MCF 10A (cell line): ENCODE measurements at regions of chr22 and their contacts with region 1.

Region 1: DNA sequence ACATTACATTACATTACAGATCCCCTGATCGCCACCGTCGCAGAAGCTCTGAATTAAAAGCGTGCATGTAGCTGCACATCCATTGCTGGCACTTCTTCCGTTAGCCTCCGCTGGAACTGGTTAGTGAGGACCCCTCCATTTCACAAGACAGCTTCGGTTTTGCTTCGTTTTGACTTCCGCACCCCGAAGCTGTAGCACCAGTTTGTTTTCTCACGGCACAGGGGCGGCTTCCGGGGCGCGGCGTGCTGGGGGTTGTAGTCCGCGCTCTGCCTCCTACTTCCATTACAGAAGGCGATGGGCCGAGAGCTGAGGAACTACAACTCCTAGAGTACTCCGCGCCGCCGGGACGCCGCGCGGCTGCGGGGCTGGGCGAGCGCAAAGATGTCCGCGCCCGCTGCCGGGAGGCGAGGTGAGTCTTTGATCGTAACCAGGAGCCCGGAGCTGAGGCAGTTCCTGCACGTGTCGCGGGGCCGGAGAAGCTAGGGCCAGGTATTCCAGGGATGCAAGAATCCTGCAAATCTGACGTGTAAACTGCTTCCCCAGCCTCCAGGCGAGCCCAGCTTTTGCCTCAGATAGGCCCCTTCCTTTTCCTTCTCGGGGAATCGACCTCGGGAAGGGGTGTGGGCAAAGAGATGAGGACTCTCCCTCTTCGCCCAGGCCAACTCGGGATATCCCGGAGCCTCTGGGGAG is at the start of gene PEX26:
- DNase-seq: peak; percentile 96
- H3K4me3 Mint-ChIP-seq: peak within 1 kb of the TSS; percentile 91
- H3K27ac Mint-ChIP-seq: peak within 1 kb of the TSS; percentile 80
- H3K4me1 Mint-ChIP-seq: peaks cover 34% of the 10 kb centered on the region
- H3K27me3 Mint-ChIP-seq: no peaks in the 10 kb centered on the region
- CTCF ChIP-seq: no peak
- total RNA-seq, gene PEX26: 41.0 and 47.1 TPM in 2 replicates

Region 2: GRCh38 chr22:17830043-17830961 is 247.5 kb before region 1 on chr22:
- CTCF ChIA-PET with region 1: interaction called, 145 read pairs
- POLR2A ChIA-PET with region 1: interaction called, 45 read pairs
- intact Hi-C with region 1: loop called (anchors 1 kb)
- DNase-seq: peak; percentile 87
- H3K4me3 Mint-ChIP-seq: no peak overlapping the region
- H3K27ac Mint-ChIP-seq: no peak overlapping the region
- H3K4me1 Mint-ChIP-seq: no peaks in the 10 kb centered on the region
- H3K27me3 Mint-ChIP-seq: no peaks in the 10 kb centered on the region
- CTCF ChIP-seq: peak; percentile 99

Region 3: GRCh38 chr22:17903564-17904295 is 174.1 kb before region 1 on chr22:
- CTCF ChIA-PET with region 1: interaction called, 12 read pairs
- POLR2A ChIA-PET with region 1: no interaction called
- intact Hi-C with region 1: no loop called
- DNase-seq: no peak
- H3K4me3 Mint-ChIP-seq: no peak overlapping the region
- H3K27ac Mint-ChIP-seq: no peak overlapping the region
- H3K4me1 Mint-ChIP-seq: peaks cover 11% of the 10 kb centered on the region
- H3K27me3 Mint-ChIP-seq: no peaks in the 10 kb centered on the region
- CTCF ChIP-seq: no peak

Region 4: DNA sequence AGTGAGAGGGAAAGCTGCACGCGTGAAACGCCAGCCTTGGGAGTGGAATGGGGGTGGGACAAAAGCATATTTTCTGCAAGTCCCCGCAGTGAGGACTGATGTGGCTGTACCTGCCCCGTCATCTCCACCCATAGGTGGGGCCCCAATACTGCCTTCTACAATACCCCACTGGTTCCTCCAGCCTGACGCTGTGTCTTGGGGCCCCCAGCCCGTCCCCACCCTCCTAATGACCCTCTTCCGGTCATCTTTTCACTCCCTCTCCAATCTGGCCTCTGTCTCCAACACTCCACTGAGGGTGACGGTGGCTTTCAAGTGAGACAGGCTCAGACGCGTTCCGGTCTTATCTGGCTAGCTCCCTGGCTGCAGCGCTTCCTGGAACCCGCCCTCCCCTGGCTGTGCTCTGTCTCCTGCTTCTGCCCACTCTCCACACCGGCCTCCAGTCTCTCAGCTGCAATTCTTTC is 157.6 kb before region 1 on chr22:
- CTCF ChIA-PET with region 1: interaction called, 16 read pairs
- POLR2A ChIA-PET with region 1: interaction called, 4 read pairs
- intact Hi-C with region 1: no loop called
- DNase-seq: peak; percentile 51
- H3K4me3 Mint-ChIP-seq: peak overlapping the region; percentile 33
- H3K27ac Mint-ChIP-seq: peak overlapping the region; percentile 83
- H3K4me1 Mint-ChIP-seq: peaks cover 50% of the 10 kb centered on the region
- H3K27me3 Mint-ChIP-seq: no peaks in the 10 kb centered on the region
- CTCF ChIP-seq: no peak

Region 5: GRCh38 chr22:18012531-18012930 is 65.3 kb before region 1 on chr22:
- CTCF ChIA-PET with region 1: interaction called, 28 read pairs
- POLR2A ChIA-PET with region 1: interaction called, 25 read pairs
- intact Hi-C with region 1: no loop called
- DNase-seq: no peak
- H3K4me3 Mint-ChIP-seq: no peak overlapping the region
- H3K27ac Mint-ChIP-seq: peak overlapping the region; percentile 41
- H3K4me1 Mint-ChIP-seq: peaks cover 22% of the 10 kb centered on the region
- H3K27me3 Mint-ChIP-seq: no peaks in the 10 kb centered on the region
- CTCF ChIP-seq: no peak

Region 6: DNA sequence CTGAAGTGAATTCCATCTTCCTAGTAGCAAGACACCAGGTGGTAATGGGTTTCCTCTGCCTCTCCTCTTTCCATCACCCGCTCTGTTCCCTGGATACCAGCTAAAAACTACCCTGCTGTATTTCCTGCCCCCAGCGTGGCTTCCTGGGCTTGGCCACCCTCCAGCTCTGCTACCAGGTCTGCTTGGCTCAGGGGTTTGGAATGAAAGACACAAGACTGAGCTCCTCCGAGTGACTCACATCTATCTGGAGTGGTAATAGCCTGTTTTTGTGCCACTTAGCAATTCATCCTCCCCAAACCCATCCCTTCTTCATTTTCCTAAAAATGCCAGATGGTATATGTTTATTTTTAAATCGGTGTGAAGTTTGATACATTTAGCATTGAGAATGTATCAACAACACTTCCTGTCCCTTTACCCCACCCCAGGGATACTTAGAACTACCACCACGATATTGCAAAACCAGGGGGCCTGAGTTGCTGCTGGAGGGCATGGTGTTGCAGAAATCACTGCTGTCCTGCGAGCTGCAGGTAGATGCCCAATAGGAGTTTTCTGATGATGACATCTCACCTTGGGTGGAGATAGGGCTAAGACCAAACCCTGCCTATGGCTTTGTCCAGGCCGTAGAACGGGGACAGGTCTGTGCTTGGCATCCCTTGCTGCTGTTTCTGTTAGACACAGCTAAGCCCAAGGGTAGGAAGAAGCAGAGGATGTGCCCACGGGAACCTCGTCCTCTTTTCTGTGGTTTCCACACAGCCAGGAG is 45.9 kb before region 1 on chr22:
- CTCF ChIA-PET with region 1: interaction called, 54 read pairs
- POLR2A ChIA-PET with region 1: interaction called, 66 read pairs
- intact Hi-C with region 1: no loop called
- DNase-seq: peak; percentile 98
- H3K4me3 Mint-ChIP-seq: peak overlapping the region; percentile 12
- H3K27ac Mint-ChIP-seq: peak overlapping the region; percentile 37
- H3K4me1 Mint-ChIP-seq: peaks cover 56% of the 10 kb centered on the region
- H3K27me3 Mint-ChIP-seq: no peaks in the 10 kb centered on the region
- CTCF ChIP-seq: no peak

Region 7: DNA sequence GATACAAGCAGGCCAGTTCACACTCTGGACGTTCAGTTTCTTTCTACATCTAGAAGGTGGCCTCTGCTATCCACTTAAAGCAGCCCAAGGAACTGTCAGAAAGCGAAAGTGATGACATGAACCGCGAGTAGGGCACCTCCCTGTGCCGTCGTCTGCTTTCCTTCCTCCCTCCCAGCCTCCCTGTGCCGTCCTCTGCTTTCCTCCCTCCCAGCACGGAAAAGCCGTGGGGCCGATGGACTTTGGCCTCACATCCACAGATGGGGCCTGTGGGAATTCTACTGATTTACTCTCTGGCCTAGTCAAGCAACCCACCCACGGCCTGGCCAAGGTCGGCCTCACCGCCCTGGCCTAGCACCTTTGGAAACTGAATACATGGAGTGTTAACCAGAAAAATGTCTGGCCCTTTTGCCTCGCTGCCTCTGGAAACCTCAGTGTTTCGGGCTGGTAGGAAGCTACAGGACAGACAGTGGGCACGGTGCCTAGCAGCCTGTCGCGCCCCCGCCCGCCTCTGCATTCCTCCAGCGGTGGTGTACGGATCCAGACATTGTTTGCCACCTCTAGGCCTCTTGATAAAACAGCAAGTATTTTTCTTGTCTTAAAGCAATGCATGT is 14.2 kb after region 1 on chr22:
- CTCF ChIA-PET with region 1: interaction called, 48 read pairs
- POLR2A ChIA-PET with region 1: interaction called, 70 read pairs
- intact Hi-C with region 1: no loop called
- DNase-seq: peak; percentile 76
- H3K4me3 Mint-ChIP-seq: peak overlapping the region; percentile 75
- H3K27ac Mint-ChIP-seq: peak overlapping the region; percentile 97
- H3K4me1 Mint-ChIP-seq: peaks cover 14% of the 10 kb centered on the region
- H3K27me3 Mint-ChIP-seq: no peaks in the 10 kb centered on the region
- CTCF ChIP-seq: no peak

Region 8: GRCh38 chr22:18126601-18127000 is 48.8 kb after region 1 on chr22:
- CTCF ChIA-PET with region 1: no interaction called
- POLR2A ChIA-PET with region 1: no interaction called
- intact Hi-C with region 1: no loop called
- DNase-seq: no peak
- H3K4me3 Mint-ChIP-seq: no peak overlapping the region
- H3K27ac Mint-ChIP-seq: no peak overlapping the region
- H3K4me1 Mint-ChIP-seq: no peaks in the 10 kb centered on the region
- H3K27me3 Mint-ChIP-seq: no peaks in the 10 kb centered on the region
- CTCF ChIP-seq: no peak